CD8-positive, alpha-beta T cell (primary cell): ENCODE measurements at regions of chrX and their contacts with region 1.

Region 1: DNA sequence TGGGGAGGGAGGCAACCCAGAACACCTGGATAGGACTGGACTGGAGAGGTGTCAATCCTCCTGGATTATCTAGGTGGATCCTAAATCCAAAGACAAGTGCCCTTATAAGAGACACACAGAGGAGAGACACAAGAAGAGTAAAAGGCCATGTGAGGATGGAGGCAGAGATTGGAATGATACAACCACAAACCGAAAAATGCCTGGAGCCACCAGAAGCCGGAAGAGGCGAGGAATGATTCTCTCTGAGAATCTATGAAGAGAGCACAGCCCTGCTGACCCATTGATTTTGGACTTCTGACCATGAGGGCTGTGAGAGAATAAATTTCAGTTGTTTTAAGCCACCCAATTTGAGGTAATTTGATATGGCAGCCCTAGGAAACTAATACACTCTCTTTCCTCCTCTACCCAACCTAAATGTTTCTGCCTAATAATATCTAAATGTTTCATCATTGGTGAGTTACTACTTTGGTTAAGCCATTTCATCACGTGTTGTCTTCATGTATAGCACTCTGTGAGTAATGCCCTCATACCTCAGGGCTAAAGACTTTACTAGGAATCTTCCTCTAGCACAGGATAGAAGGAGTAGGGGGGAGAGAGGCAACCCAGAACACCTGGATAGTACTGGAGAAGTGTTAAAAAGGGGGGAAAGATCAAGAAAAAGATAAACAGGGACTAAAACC is 19.9 kb downstream of the GPC3 start:
- DNase-seq: no peak
- ATAC-seq: no peak
- H3K4me3 ChIP-seq: no peak overlapping the region
- H3K4me3 Mint-ChIP-seq: no peak overlapping the region
- H3K27ac ChIP-seq: no peak overlapping the region
- H3K27ac Mint-ChIP-seq: no peak overlapping the region
- H3K4me1 ChIP-seq: no peaks in the 10 kb centered on the region
- H3K4me1 Mint-ChIP-seq: no peaks in the 10 kb centered on the region
- H3K27me3 ChIP-seq: no peaks in the 10 kb centered on the region
- H3K27me3 Mint-ChIP-seq: peaks cover 2% of the 10 kb centered on the region
- CTCF ChIP-seq: no peak

Region 2: DNA sequence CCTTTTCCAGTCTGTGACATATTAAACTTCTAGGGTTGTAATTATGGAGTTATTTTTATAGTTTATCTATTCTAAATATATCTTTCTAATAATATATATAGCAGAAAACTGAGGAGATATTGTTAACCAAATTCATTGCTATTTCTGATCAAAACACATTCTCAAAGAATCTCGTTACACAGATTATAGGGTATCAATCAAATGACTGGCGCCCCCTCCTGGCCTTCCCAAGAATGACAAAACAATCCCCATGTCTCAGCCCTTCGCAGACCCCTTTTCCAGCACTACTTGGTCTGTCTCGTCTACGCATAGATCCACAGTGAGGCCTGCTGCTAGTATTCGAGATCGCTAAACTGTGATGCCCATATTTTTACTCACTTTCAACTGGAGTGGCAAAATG is 189.4 kb before region 1 on chrX:
- CTCF ChIA-PET with region 1: no interaction called
- POLR2A ChIA-PET with region 1: no interaction called
- intact Hi-C with region 1: no loop called
- DNase-seq: peak; percentile 1 to 68 (median 38)
- ATAC-seq: no peak
- H3K4me3 ChIP-seq: no peak overlapping the region
- H3K4me3 Mint-ChIP-seq: no peak overlapping the region
- H3K27ac ChIP-seq: no peak overlapping the region
- H3K27ac Mint-ChIP-seq: no peak overlapping the region
- H3K4me1 ChIP-seq: no peaks in the 10 kb centered on the region
- H3K4me1 Mint-ChIP-seq: no peaks in the 10 kb centered on the region
- H3K27me3 ChIP-seq: no peaks in the 10 kb centered on the region
- H3K27me3 Mint-ChIP-seq: no peaks in the 10 kb centered on the region
- CTCF ChIP-seq: peak; percentile 51

Region 3: DNA sequence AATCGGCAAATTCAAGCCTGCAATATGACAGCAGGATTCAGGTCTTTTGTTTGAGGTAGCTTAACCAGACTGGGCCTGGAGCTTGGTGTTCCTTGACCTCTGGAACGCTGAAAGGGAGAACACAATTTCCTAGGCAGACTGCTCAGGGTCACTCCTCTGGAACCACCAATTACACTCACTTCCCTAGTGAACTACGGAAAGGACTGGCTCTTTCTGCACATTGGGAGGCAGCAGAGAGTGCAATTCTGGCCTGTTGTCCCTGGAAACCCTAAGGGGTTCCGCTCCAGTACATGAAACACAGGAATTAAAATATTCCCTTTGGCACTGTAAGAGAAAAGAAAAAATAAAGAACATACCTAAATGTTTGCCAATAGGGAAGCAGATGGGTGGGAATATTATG is 38.6 kb before region 1 on chrX:
- CTCF ChIA-PET with region 1: no interaction called
- POLR2A ChIA-PET with region 1: no interaction called
- intact Hi-C with region 1: loop called in 1 of 2 experiments (anchors 1 kb)
- DNase-seq: no peak
- ATAC-seq: no peak
- H3K4me3 ChIP-seq: no peak overlapping the region
- H3K4me3 Mint-ChIP-seq: no peak overlapping the region
- H3K27ac ChIP-seq: no peak overlapping the region
- H3K27ac Mint-ChIP-seq: no peak overlapping the region
- H3K4me1 ChIP-seq: peaks cover 11% of the 10 kb centered on the region
- H3K4me1 Mint-ChIP-seq: peaks cover 19% of the 10 kb centered on the region
- H3K27me3 ChIP-seq: no peaks in the 10 kb centered on the region
- H3K27me3 Mint-ChIP-seq: no peaks in the 10 kb centered on the region
- CTCF ChIP-seq: no peak

Region 4: GRCh38 chrX:134026565-134027311 is 61.3 kb after region 1 on chrX:
- CTCF ChIA-PET with region 1: no interaction called
- POLR2A ChIA-PET with region 1: no interaction called
- intact Hi-C with region 1: loop called in 1 of 2 experiments (anchors 10 kb)
- DNase-seq: peak in 4 of 9 experiments; percentile 0 to 44 (median 13)
- ATAC-seq: peak; percentile 36
- H3K4me3 ChIP-seq: no peak overlapping the region
- H3K4me3 Mint-ChIP-seq: peak overlapping the region; percentile 39
- H3K27ac ChIP-seq: no peak overlapping the region
- H3K27ac Mint-ChIP-seq: no peak overlapping the region
- H3K4me1 ChIP-seq: no peaks in the 10 kb centered on the region
- H3K4me1 Mint-ChIP-seq: peaks cover 7% of the 10 kb centered on the region
- H3K27me3 ChIP-seq: no peaks in the 10 kb centered on the region
- H3K27me3 Mint-ChIP-seq: no peaks in the 10 kb centered on the region
- CTCF ChIP-seq: no peak